CD14-positive monocyte (primary cell): ENCODE measurements at regions of chrX and their contacts with region 1.

Region 1: GRCh38 chrX:119565107-119565663 is at the start of gene STEEP1:
- DNase-seq: peak; percentile 86 to 91 (median 87)
- H3K4me3 ChIP-seq: peak within 1 kb of the TSS; percentile 51 to 82 (median 80)
- H3K4me3 Mint-ChIP-seq: peak within 1 kb of the TSS; percentile 87 to 95
- H3K27ac ChIP-seq: peak within 1 kb of the TSS; percentile 57 to 77
- H3K27ac Mint-ChIP-seq: peak within 1 kb of the TSS; percentile 90 to 96 (median 95)
- H3K4me1 ChIP-seq: peaks cover 4 to 7% of the 10 kb centered on the region in 2 donors
- H3K4me1 Mint-ChIP-seq: peaks cover 12% of the 10 kb centered on the region
- H3K27me3 ChIP-seq: no peaks in the 10 kb centered on the region
- H3K27me3 Mint-ChIP-seq: peaks cover 2 to 11% (median 2%) of the 10 kb centered on the region in 3 donors
- CTCF ChIP-seq: no peak
- polyA plus RNA-seq, gene STEEP1: 10.6 to 13.2 (median 12.6) TPM

Region 2: GRCh38 chrX:119516157-119516702 is 49.0 kb before region 1 on chrX:
- intact Hi-C with region 1: loop called in 1 of 2 experiments (anchors 10 kb)
- DNase-seq: peak; percentile 41 to 61 (median 60)
- H3K4me3 ChIP-seq: no peak overlapping the region
- H3K4me3 Mint-ChIP-seq: peak overlapping the region in 1 of 2 donors; percentile 30
- H3K27ac ChIP-seq: no peak overlapping the region
- H3K27ac Mint-ChIP-seq: peak overlapping the region in 2 of 7 donors; percentile 1 to 45
- H3K4me1 ChIP-seq: peaks cover 2 to 4% of the 10 kb centered on the region in 2 donors
- H3K4me1 Mint-ChIP-seq: peaks cover 4% of the 10 kb centered on the region
- H3K27me3 ChIP-seq: no peaks in the 10 kb centered on the region
- H3K27me3 Mint-ChIP-seq: peaks cover 0 to 14% (median 5%) of the 10 kb centered on the region in 3 donors
- CTCF ChIP-seq: peak; percentile 69